ENCODE measurements at regions of chr6 and their contacts with region 1.

Region 1: DNA sequence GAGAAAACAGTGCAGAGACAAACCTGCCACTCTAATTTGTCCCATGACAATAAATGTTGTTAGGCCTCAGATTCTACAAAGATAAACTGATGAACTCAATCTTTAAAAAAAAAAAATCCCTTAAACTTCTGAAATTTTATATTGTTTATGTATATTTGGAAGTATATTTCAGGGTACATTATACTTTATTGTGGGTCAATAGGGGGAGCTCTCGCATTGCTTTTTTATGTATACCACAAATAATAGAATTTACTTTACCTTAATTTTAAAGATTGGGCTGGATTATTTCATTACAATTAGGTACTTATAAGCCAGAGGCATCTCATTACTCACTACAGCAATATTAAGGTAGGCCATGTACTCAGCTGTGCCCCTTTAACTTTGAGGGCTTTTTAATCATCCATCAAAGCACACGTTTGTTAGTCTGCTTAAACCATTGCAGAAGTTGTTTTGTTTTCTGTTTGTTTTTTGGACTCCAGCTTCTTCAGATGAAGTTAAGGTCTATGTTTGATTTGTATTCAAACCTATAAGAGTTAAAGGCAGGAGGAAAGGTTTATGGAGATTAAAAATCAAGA is 56.3 kb upstream of the EYA4 start:
- DNase-seq: no peak
- ATAC-seq: peak; percentile 39

Region 2: GRCh38 chr6:132962936-132963868 is 221.7 kb before region 1 on chr6:
- intact Hi-C with region 1: loop called (anchors 10 kb)
- DNase-seq: peak; percentile 75
- ATAC-seq: peak; percentile 90

Region 3: GRCh38 chr6:133542056-133542821 is 357.4 kb after region 1 on chr6:
- intact Hi-C with region 1: no loop called
- DNase-seq: no peak
- ATAC-seq: no peak

Region 4: GRCh38 chr6:134093007-134093591 is 908.2 kb after region 1 on chr6:
- intact Hi-C with region 1: no loop called
- DNase-seq: no peak
- ATAC-seq: no peak

Measured in Right ventricle myocardium superior (tissue), 1 donor.